Activated CD4-positive, alpha-beta T cell treated with anti-CD3 and anti-CD28 coated beads for 36 hours (primary cell): ENCODE measurements at regions of chr9 and their contacts with region 1.

Region 1: DNA sequence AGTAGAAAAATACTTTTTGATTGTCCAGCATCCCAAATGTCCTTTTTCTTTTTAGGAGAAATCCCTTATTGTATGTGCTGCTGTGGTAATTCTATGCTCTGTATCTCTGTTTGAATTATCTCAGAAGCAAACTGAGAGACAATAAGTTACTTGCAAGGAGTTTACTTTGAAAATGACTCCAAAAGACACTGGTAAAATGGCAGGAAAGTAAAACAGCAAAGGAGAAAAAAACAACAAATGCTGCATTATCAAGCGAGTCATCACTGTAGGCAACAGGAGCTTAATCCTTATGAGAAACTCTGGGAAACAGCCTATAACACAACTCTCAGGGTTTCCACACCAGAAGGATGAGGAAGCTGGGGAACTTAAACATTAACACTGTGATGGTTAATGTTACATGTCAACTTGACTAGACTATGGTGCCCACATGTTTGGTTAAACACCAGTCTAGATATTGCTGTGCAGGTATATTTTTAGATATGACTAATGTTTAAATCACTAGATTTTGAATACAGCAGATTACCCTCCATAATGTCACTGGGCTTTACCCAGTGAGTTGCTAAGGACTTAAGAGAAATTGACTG is 92.6 kb upstream of the GAS1 start:
- DNase-seq: no peak
- ATAC-seq: peak; percentile 92
- H3K4me3 Mint-ChIP-seq: no peak overlapping the region
- H3K27ac Mint-ChIP-seq: no peak overlapping the region
- H3K4me1 Mint-ChIP-seq: peaks cover 9% of the 10 kb centered on the region
- H3K27me3 Mint-ChIP-seq: peaks cover 10% of the 10 kb centered on the region

Region 2: GRCh38 chr9:87107072-87107471 is 67.2 kb after region 1 on chr9:
- CTCF ChIA-PET with region 1: no interaction called
- POLR2A ChIA-PET with region 1: no interaction called
- intact Hi-C with region 1: loop called in 1 of 2 experiments (anchors 10 kb)
- DNase-seq: no peak
- ATAC-seq: no peak
- H3K4me3 Mint-ChIP-seq: no peak overlapping the region
- H3K27ac Mint-ChIP-seq: no peak overlapping the region
- H3K4me1 Mint-ChIP-seq: no peaks in the 10 kb centered on the region
- H3K27me3 Mint-ChIP-seq: peaks cover 24% of the 10 kb centered on the region